ENCODE measurements at regions of chr18 and their contacts with region 1.

Region 1: DNA sequence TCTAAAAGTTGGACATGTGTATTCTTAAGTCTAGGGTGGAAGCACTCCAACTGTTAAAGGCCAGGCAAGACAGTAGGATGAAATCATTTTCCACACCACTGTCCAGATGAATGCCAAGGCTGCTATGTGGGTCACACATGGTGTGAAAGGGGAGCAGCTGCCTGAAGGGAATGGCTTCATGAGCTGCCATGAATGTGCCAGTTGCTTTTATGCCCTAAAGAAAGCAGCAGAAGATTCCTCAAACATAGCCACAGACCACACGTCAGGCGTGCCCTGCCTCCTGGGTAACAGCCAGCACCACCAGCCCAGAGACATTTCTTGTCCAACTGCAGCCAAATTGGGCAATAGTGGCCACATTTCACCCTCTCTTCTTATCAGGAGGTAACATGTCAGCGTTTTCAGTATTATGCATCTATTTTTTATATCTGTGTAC is 130.2 kb downstream of the MTCL1 start:
- DNase-seq: no peak
- ATAC-seq: no peak
- H3K4me3 ChIP-seq: no peak overlapping the region
- H3K27ac ChIP-seq: no peak overlapping the region
- H3K4me1 ChIP-seq: no peaks in the 10 kb centered on the region
- H3K27me3 ChIP-seq: 0 out of 4 replicates have a peak, but pooled peaks cover 0 to 3% of the 10 kb centered on the region in 2 experiments
- CTCF ChIP-seq: no peak
- EP300 ChIP-seq: no peak
- POLR2A ChIP-seq: no peak
- RAD21 ChIP-seq: no peak

Region 2: GRCh38 chr18:8820396-8821082 is 15.0 kb before region 1 on chr18:
- CTCF ChIA-PET with region 1: no interaction called
- POLR2A ChIA-PET with region 1: no interaction called
- RAD21 ChIA-PET with region 1: no interaction called
- SMC1A ChIA-PET with region 1: no interaction called
- in situ Hi-C with region 1: no loop called
- intact Hi-C with region 1: no loop called
- DNase-seq: no peak
- ATAC-seq: no peak
- H3K4me3 ChIP-seq: no peak overlapping the region
- H3K27ac ChIP-seq: no peak overlapping the region
- H3K4me1 ChIP-seq: no peaks in the 10 kb centered on the region
- H3K27me3 ChIP-seq: no peaks in the 10 kb centered on the region; a peak in 3 of 4 replicates
- CTCF ChIP-seq: no peak
- EP300 ChIP-seq: no peak
- POLR2A ChIP-seq: no peak
- RAD21 ChIP-seq: no peak

Region 3: GRCh38 chr18:8960740-8961657 is 125.5 kb after region 1 on chr18:
- CTCF ChIA-PET with region 1: no interaction called
- POLR2A ChIA-PET with region 1: no interaction called
- RAD21 ChIA-PET with region 1: no interaction called
- SMC1A ChIA-PET with region 1: no interaction called
- in situ Hi-C with region 1: loop called (anchors 25 kb)
- intact Hi-C with region 1: no loop called
- DNase-seq: no peak
- ATAC-seq: no peak
- H3K4me3 ChIP-seq: no peak overlapping the region
- H3K27ac ChIP-seq: no peak overlapping the region
- H3K4me1 ChIP-seq: no peaks in the 10 kb centered on the region
- H3K27me3 ChIP-seq: no peaks in the 10 kb centered on the region; a peak in 1 of 4 replicates
- CTCF ChIP-seq: no peak
- EP300 ChIP-seq: no peak
- POLR2A ChIP-seq: no peak
- RAD21 ChIP-seq: no peak

Measured in GM12878 (cell line).